ENCODE measurements at regions of chr20 and their contacts with region 1.

Region 1: DNA sequence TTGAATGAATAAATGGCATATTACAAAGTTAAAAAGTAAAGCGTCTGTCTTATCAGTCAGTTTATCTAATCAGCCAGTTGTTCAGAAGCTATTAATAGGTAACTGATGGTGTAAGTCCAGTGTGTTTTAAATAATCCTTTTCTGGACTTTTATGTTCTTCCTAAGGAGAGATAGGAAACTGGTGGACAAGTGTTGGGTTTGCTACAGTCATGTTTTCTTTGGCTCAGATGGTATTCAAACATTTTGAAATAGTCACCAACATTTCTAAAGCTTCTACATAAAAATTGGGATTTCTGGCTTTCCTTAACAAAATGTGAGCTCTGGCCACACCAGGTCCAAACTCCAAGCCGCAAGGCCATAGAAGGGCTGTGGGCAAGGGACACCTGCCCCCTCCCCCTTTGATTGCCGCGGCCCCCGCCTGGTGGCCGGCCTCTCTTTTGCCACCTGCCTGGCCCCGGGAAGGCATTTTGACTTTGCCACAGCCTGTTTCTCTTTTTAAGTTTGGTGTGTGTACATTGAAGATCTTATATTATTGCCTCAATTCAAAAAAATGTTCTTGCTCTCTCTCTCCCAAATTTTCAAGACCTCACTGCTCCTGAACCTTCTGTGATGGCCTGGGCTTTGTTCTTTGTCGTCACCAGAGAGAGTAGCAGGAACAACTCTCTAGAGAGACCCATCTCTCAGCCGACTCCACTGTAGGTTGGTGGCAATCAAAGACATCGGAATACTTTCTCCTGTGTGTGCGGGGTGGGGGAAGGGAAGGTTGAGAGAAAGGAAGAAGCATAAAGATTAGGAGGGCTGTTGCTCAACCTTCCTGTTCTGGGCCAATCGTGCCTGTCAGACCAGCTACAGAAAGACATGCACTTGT is 84.0 kb upstream of the ZNF217 start:
- DNase-seq: peak; percentile 92
- ATAC-seq: peak; percentile 97
- H3K4me3 ChIP-seq: peak overlapping the region; percentile 45 to 70 (median 67)
- H3K27ac ChIP-seq: peak overlapping the region; percentile 90
- H3K4me1 ChIP-seq: peaks cover 62% of the 10 kb centered on the region
- H3K27me3 ChIP-seq: no peaks in the 10 kb centered on the region
- CTCF ChIP-seq: peak; percentile 77
- EP300 ChIP-seq: peak; percentile 7 to 80; a peak in 3 of 4 replicates
- POLR2A ChIP-seq: peak in 1 of 2 experiments; percentile 47; a peak in 2 of 4 replicates
- RAD21 ChIP-seq: peak; percentile 91

Region 2: DNA sequence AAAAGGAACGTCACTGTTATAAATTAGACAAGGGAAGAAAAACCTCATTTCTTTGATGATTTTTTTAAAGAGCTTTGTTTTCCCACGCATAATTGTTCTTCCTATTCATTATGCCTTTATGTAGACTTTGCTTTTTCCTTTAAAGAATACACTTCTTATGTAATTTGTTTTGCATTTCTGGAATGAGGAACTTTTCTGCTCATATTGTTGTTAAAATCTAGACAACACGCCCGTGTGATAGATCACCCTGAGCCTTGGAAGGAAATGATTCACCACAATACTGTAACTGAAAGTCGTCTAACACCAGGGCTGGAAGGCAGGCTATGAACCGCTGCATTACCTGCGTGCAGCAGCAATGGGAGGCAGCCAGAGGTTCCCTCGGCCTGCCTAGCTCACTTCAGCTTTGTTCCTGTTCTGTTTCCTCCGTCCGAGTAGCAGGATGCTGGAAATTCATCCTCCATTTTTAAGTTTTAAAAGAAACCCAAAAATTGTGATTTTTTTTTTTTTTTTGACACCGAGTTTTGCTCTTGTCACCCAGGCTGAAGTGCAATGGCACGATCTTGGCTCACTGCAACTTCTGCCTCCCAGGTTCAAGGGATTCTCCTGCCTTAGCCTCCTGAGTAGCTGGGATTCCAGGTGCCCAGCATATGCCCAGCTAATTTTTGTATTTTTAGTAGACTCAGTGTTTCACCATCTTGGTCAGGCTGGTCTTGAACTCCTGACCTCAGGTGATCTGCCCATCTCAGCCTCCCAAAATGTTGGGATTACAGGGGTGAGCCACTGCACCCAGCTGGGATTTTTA is 34.4 kb before region 1 on chr20:
- CTCF ChIA-PET with region 1: no interaction called
- POLR2A ChIA-PET with region 1: interaction called, 45 read pairs
- in situ Hi-C with region 1: no loop called
- intact Hi-C with region 1: loop called (anchors 2 kb)
- DNase-seq: no peak
- ATAC-seq: peak; percentile 77
- H3K4me3 ChIP-seq: peak overlapping the region; percentile 34 to 64 (median 48); a peak in 5 of 6 replicates
- H3K27ac ChIP-seq: peak overlapping the region; percentile 93
- H3K4me1 ChIP-seq: peaks cover 81% of the 10 kb centered on the region
- H3K27me3 ChIP-seq: no peaks in the 10 kb centered on the region
- CTCF ChIP-seq: no peak
- EP300 ChIP-seq: no peak; a peak in 1 of 4 replicates
- POLR2A ChIP-seq: peak in 1 of 2 experiments; percentile 77; a peak in 2 of 4 replicates
- RAD21 ChIP-seq: no peak

Region 3: DNA sequence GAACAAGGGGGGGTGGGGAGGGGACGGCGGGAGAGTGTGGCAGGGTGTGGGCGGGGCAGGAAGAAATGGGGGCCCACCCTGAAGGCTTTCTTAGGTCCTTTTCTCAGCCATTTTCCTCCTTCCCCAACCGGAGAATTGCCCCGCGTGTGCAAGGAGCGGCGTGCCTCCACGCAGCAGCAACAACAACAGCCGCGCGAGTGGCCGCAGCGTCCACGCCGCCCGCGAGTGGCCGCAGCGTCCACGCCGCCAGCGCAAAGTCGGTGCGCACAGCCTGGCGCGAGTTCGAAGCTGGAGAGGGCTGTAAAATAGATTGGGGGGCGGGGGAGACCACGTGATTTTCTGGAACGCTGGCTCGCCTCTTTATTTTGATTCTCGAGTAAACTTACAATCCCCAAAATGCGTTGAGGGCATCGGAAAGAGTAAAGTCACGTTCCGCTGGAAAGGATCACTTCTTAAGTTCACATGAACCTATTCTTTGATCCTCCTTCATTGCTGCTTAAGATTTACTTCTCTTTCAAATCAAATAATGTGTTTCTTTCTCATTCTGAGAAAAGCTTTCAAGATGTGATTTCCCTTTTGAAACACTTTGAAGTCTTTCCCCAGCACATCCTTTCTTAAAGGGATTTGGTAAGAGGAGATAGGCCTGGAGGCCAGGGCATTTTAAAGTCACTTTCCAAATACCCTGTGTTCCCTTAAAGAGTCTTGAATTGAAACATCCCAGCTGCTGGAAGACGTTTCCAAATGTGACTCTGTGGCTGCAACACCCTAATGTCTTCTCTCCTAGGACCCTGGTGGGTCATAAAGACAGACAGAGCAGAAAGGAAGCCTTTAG is 17.4 kb before region 1 on chr20:
- CTCF ChIA-PET with region 1: no interaction called
- POLR2A ChIA-PET with region 1: interaction called, 37 read pairs
- in situ Hi-C with region 1: no loop called
- intact Hi-C with region 1: no loop called
- DNase-seq: no peak
- ATAC-seq: no peak
- H3K4me3 ChIP-seq: peak overlapping the region in 2 of 3 experiments; percentile 6 to 7; a peak in 2 of 6 replicates
- H3K27ac ChIP-seq: peak overlapping the region; percentile 9
- H3K4me1 ChIP-seq: peaks cover 55% of the 10 kb centered on the region
- H3K27me3 ChIP-seq: no peaks in the 10 kb centered on the region
- CTCF ChIP-seq: no peak
- EP300 ChIP-seq: no peak
- POLR2A ChIP-seq: no peak
- RAD21 ChIP-seq: no peak

Region 4: DNA sequence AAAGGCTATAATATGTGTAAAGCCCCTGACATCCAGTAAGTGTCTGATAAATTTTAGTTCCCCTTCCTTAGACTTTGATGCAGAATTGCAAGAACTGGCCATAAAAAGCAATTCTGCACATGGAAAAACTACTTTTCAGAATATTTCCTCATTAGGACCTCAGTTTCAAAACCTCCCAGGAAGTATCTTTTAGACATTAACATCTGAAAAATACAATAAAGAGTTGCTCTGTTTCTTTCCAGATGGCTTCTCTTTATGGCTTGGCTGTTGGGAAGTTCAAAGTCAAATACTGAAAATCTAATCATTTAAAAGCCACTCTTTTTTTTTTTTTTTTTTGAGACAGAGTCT is 22.3 kb after region 1 on chr20:
- CTCF ChIA-PET with region 1: no interaction called
- POLR2A ChIA-PET with region 1: no interaction called
- in situ Hi-C with region 1: no loop called
- intact Hi-C with region 1: no loop called
- DNase-seq: no peak
- ATAC-seq: no peak
- H3K4me3 ChIP-seq: no peak overlapping the region
- H3K27ac ChIP-seq: no peak overlapping the region
- H3K4me1 ChIP-seq: peaks cover 31% of the 10 kb centered on the region
- H3K27me3 ChIP-seq: no peaks in the 10 kb centered on the region
- CTCF ChIP-seq: no peak
- EP300 ChIP-seq: no peak
- POLR2A ChIP-seq: no peak
- RAD21 ChIP-seq: no peak

Region 5: DNA sequence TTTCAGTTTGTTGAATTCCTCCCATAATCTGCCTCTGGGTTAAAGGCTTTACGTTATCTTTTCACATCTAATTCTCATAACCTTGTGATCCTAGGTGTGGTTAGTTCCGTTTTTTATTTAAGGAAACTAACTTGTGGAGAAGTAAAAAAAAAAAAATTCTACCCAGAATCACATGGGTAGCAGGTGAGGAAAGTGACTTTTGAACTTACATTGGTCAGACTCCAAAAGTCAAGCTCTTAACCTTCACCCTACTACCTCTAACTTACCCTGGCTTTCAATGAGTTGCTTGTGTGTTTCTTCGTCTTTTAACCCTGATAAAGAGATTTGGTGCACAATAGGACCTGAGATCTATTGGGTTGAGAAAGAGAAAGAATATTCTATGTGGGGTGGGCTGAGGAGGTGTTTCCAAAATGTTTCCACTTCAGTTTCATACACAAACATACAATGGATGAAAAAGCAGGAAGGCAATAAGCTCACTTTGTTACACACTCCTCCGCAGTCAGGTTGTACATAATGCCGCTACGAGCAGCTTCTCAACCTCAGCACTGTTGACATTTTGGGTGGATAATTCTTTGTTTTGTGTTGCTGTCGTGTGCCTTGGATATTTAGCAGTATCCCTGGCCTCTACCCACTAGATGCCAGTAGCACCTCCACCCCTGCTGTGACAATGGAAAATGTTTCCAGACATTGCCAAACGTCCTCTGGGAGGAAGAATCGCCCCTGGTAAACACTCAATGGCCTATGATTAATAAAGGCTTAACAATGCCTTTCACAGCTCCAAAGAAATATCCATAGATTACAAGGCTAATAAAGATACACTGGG is 109.0 kb after region 1 on chr20:
- CTCF ChIA-PET with region 1: no interaction called
- POLR2A ChIA-PET with region 1: interaction called, 9 read pairs
- in situ Hi-C with region 1: no loop called
- intact Hi-C with region 1: loop called (anchors 5 kb)
- DNase-seq: peak; percentile 56
- ATAC-seq: peak; percentile 77
- H3K4me3 ChIP-seq: peak overlapping the region; percentile 26 to 52 (median 27)
- H3K27ac ChIP-seq: peak overlapping the region; percentile 72
- H3K4me1 ChIP-seq: peaks cover 65% of the 10 kb centered on the region
- H3K27me3 ChIP-seq: no peaks in the 10 kb centered on the region
- CTCF ChIP-seq: peak; percentile 46
- EP300 ChIP-seq: peak in 1 of 2 experiments; percentile 82; a peak in 2 of 4 replicates
- POLR2A ChIP-seq: no peak
- RAD21 ChIP-seq: peak; percentile 40

Measured in HepG2 (cell line).